GM12878 (cell line): ENCODE measurements at regions of chr14 and their contacts with region 1.

Region 1: DNA sequence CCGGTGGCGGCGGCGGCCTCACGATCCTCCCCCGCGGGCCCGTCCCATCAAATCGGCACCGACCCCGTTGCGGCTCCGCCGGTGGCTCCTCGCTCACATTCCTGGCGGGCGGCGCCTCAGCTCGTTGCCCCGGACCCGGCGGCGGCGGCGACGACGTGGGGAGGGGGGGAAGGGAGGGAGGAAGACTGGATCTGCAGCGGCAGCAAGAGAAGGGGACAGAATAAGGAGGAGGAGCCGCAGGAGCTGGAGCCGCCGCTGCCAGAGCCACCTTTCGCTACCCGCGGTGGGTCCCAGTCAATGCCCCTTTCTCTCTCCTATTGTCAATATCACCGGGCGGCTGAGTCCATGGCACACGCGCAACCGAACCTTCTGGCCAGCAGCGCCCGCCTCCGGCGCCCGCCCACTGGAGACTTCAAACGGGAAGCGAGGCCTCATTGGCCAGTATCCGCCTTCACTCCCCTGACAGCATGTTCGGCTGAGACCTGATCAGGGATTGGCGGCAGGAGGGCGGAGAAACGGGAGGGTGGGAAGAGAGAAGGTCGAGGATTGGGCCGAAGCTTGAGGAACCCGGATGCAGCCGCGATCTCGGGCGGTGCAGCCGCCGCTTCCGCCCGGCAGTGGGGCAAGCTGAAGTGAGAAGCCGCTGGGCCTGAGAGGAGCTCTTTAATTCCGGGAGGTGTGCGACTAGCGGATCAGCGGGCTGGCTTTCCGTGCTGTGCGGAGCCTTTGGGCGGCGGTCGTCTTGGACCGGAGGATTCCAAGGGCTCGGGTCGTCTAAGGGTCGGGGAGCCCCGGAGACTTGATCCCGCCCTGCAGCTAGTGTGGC is at the start of gene PPP2R5E:
- DNase-seq: peak; percentile 96
- ATAC-seq: peak; percentile 96
- H3K4me3 ChIP-seq: peak within 1 kb of the TSS; percentile 99
- H3K27ac ChIP-seq: peak within 1 kb of the TSS; percentile 77
- H3K4me1 ChIP-seq: no peaks in the 10 kb centered on the region
- H3K27me3 ChIP-seq: no peaks in the 10 kb centered on the region
- CTCF ChIP-seq: no peak
- EP300 ChIP-seq: no peak
- POLR2A ChIP-seq: peak; percentile 94
- RAD21 ChIP-seq: no peak
- polyA plus RNA-seq, gene PPP2R5E: 13.1 to 13.3 TPM

Region 2: GRCh38 chr14:63388763-63389431 is 154.3 kb before region 1 on chr14:
- CTCF ChIA-PET with region 1: interaction called, 31 read pairs
- POLR2A ChIA-PET with region 1: no interaction called
- RAD21 ChIA-PET with region 1: interaction called, 64 read pairs
- SMC1A ChIA-PET with region 1: interaction called, 28 read pairs
- in situ Hi-C with region 1: no loop called
- intact Hi-C with region 1: loop called (anchors 2 kb)
- DNase-seq: peak; percentile 24
- ATAC-seq: peak; percentile 98
- H3K4me3 ChIP-seq: no peak overlapping the region
- H3K27ac ChIP-seq: no peak overlapping the region
- H3K4me1 ChIP-seq: peaks cover 2% of the 10 kb centered on the region; the same call in 1 of the 2 replicates
- H3K27me3 ChIP-seq: no peaks in the 10 kb centered on the region
- CTCF ChIP-seq: peak; percentile 88 to 89 (median 88)
- EP300 ChIP-seq: no peak
- POLR2A ChIP-seq: no peak
- RAD21 ChIP-seq: peak; percentile 96

Region 3: DNA sequence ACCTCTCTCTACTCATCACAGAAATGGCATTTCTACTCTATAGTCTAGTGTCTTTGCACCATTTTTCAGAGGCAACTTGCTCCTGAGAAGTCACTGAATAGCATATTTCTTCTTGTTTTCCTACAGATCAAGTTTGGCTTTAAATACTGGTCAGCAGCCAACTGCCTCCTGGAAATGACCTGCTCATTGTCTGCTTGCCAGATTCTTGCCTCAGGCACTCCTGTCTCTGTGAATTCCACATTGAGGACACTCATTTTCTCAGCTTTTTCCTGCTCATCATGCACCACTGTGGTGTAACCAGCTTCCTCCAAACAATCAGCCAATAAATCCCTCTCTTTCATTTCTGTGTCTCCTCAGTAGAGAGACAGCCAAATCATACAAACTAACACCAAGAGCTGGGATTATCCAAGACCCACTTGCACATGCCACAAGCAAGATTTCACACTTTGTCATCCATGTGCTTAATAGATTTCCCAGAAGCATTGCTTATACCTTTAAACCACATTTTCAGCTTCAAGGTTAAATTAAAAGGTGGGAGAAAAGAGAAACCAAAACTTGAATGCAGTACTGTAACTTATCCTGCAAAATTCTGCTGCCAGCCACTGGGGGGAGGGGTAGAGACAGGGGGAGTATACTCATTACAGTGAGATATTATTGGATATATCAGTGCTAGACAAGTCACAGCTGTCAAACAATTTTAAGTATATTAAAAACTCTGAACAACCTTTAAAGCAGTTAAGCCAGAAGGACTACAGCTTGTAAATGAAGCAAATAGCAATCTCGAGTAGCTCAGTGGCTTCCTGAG is 105.1 kb before region 1 on chr14:
- CTCF ChIA-PET with region 1: interaction called, 21 read pairs
- POLR2A ChIA-PET with region 1: interaction called, 5 read pairs
- RAD21 ChIA-PET with region 1: interaction called, 16 read pairs
- SMC1A ChIA-PET with region 1: interaction called, 12 read pairs
- in situ Hi-C with region 1: no loop called
- intact Hi-C with region 1: no loop called
- DNase-seq: no peak
- ATAC-seq: peak; percentile 82
- H3K4me3 ChIP-seq: no peak overlapping the region
- H3K27ac ChIP-seq: peak overlapping the region; percentile 45
- H3K4me1 ChIP-seq: peaks cover 8% of the 10 kb centered on the region
- H3K27me3 ChIP-seq: no peaks in the 10 kb centered on the region
- CTCF ChIP-seq: peak; percentile 14 to 41 (median 32); a peak in 3 of 6 replicates
- EP300 ChIP-seq: no peak
- POLR2A ChIP-seq: no peak
- RAD21 ChIP-seq: peak; percentile 36; the same call in 1 of the 2 replicates

Region 4: GRCh38 chr14:63493246-63493645 is 50.0 kb before region 1 on chr14:
- CTCF ChIA-PET with region 1: interaction called, 13 read pairs
- POLR2A ChIA-PET with region 1: interaction called, 8 read pairs
- RAD21 ChIA-PET with region 1: interaction called, 17 read pairs
- SMC1A ChIA-PET with region 1: interaction called, 25 read pairs
- in situ Hi-C with region 1: no loop called
- intact Hi-C with region 1: no loop called
- DNase-seq: no peak
- ATAC-seq: peak; percentile 74
- H3K4me3 ChIP-seq: no peak overlapping the region
- H3K27ac ChIP-seq: no peak overlapping the region
- H3K4me1 ChIP-seq: no peaks in the 10 kb centered on the region
- H3K27me3 ChIP-seq: no peaks in the 10 kb centered on the region
- CTCF ChIP-seq: peak; percentile 11 to 30 (median 13); a peak in 1 of 6 replicates
- EP300 ChIP-seq: no peak
- POLR2A ChIP-seq: no peak
- RAD21 ChIP-seq: peak; percentile 25; the same call in 1 of the 2 replicates

Region 5: GRCh38 chr14:63641473-63642228 is 98.4 kb after region 1 on chr14 and contains the start of gene WDR89:
- CTCF ChIA-PET with region 1: no interaction called
- POLR2A ChIA-PET with region 1: interaction called, 16 read pairs
- RAD21 ChIA-PET with region 1: interaction called, 10 read pairs
- SMC1A ChIA-PET with region 1: interaction called, 5 read pairs
- in situ Hi-C with region 1: no loop called
- intact Hi-C with region 1: loop called (anchors 5 kb)
- DNase-seq: peak; percentile 100
- ATAC-seq: peak; percentile 91
- H3K4me3 ChIP-seq: peak within 1 kb of the TSS; percentile 69
- H3K27ac ChIP-seq: peak within 1 kb of the TSS; percentile 99
- H3K4me1 ChIP-seq: peaks cover 17% of the 10 kb centered on the region
- H3K27me3 ChIP-seq: no peaks in the 10 kb centered on the region
- CTCF ChIP-seq: peak; percentile 55 to 79 (median 76)
- EP300 ChIP-seq: peak; percentile 34 to 56; a peak in 2 of 4 replicates
- POLR2A ChIP-seq: peak; percentile 91
- RAD21 ChIP-seq: peak; percentile 33; the same call in 1 of the 2 replicates
- polyA plus RNA-seq, gene WDR89: 17.3 to 17.6 TPM

Region 6: DNA sequence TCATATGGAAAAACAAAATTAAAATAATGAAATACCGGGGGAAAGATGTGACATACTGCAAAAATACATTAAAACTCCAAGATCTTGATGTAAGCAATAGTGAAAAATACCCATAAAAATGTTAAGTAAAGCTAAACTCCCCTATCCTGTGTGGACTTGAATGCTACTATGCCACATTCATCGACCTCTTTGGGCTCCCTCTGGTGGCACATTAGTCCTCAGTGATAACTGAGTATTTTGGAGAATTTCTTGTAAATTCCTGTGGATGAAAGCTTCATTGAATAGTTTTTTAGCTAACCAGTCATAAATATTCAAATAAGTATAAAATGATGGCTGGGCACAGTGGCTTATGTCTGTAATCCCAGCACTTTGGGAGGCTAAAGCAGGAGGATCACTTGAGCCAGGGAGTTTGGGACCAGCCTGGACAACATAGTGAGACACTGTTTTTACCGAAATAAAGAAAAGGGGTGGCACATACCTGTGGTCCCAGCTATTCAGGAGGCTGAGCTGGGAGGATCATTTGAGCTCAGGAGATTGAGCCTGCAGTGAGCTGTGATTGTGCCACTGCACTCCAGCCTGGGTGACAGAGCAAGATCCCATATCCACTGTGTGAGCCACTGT is 227.1 kb after region 1 on chr14:
- CTCF ChIA-PET with region 1: interaction called, 5 read pairs
- POLR2A ChIA-PET with region 1: no interaction called
- RAD21 ChIA-PET with region 1: interaction called, 10 read pairs
- SMC1A ChIA-PET with region 1: interaction called, 6 read pairs
- in situ Hi-C with region 1: no loop called
- intact Hi-C with region 1: no loop called
- DNase-seq: no peak
- ATAC-seq: peak; percentile 94
- H3K4me3 ChIP-seq: no peak overlapping the region
- H3K27ac ChIP-seq: no peak overlapping the region
- H3K4me1 ChIP-seq: peaks cover 9% of the 10 kb centered on the region
- H3K27me3 ChIP-seq: no peaks in the 10 kb centered on the region
- CTCF ChIP-seq: peak; percentile 62 to 76 (median 67)
- EP300 ChIP-seq: no peak
- POLR2A ChIP-seq: no peak
- RAD21 ChIP-seq: peak; percentile 87